Panc1 (cell line): ENCODE measurements at regions of chr17 and their contacts with region 1.

Region 1: GRCh38 chr17:50361561-50362480 is 11.2 kb downstream of the MRPL27 start:
- DNase-seq: peak; percentile 43
- ATAC-seq: peak; percentile 76
- H3K4me3 ChIP-seq: no peak overlapping the region
- H3K27ac ChIP-seq: no peak overlapping the region
- H3K4me1 ChIP-seq: peaks cover 7% of the 10 kb centered on the region; the same call in 1 of the 2 replicates
- H3K27me3 ChIP-seq: no peaks in the 10 kb centered on the region
- CTCF ChIP-seq: peak; percentile 92

Region 2: DNA sequence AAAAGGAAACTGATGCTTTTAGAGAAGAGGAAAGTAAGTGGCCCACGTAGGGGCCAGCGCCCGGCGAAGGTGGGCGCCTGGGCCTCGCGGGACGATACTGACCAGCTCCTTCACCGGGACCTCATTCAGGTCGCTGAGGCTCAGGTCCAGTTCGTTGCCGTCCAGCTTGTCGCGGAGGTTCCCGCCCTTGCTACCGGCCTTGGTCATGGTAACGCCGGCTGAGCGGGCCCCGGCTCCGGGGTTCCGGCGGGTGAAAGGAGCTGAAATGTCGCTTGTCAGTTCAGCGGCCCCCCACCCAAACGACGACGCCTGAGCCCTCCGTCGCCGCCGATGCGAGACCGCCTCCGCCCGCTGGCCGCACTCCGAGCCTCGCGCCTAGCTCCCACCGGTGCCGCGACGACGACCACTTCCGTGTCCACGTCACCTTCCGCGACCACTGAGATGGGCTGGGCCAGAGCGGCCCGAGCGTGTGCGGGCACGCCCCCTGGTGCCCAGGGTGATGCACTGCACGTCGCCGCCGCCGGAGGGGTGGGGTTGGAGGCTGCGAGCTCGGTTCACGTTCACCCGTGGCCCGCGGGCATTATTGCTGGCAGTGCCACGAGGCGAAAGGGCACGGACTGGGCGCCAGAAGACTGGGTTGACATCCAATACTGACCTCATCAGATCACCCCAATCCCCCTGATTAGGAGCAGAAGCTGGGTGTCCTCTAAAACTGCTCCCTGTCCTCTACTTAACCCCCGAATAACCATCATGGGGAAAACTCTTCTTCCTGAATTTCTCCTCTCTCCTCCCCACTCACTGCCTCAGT is 35.5 kb after region 1 on chr17 and contains the start of gene LRRC59:
- CTCF ChIA-PET with region 1: interaction called, 21 read pairs
- POLR2A ChIA-PET with region 1: no interaction called
- in situ Hi-C with region 1: no loop called
- intact Hi-C with region 1: no loop called
- DNase-seq: peak; percentile 57
- ATAC-seq: peak; percentile 96
- H3K4me3 ChIP-seq: peak within 1 kb of the TSS; percentile 87 to 100
- H3K27ac ChIP-seq: peak within 1 kb of the TSS; percentile 95
- H3K4me1 ChIP-seq: peaks cover 14% of the 10 kb centered on the region; the same call in 1 of the 2 replicates
- H3K27me3 ChIP-seq: no peaks in the 10 kb centered on the region
- CTCF ChIP-seq: peak; percentile 99
- total RNA-seq, gene LRRC59: 167 TPM

Region 3: DNA sequence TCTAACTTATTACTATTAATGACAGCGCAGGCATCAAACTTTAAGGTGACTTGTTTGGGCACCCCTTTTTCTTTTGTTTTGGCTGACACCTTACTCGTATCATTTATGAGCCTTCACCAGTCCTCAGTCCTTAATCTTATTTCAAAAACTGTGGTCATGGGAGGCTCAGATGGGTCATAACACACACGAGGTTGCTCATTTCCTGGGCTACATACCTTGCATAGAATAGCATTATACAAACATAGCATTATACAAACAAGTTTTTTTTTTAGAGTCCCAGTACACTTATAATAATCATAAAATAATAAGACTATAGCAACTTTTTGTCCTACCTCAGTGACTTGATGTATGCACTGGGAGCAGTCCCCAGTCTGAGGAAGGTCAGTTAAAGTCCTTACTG is 53.0 kb after region 1 on chr17:
- CTCF ChIA-PET with region 1: no interaction called
- POLR2A ChIA-PET with region 1: no interaction called
- in situ Hi-C with region 1: no loop called
- intact Hi-C with region 1: no loop called
- DNase-seq: no peak
- ATAC-seq: no peak
- H3K4me3 ChIP-seq: no peak overlapping the region
- H3K27ac ChIP-seq: no peak overlapping the region
- H3K4me1 ChIP-seq: no peaks in the 10 kb centered on the region
- H3K27me3 ChIP-seq: no peaks in the 10 kb centered on the region
- CTCF ChIP-seq: no peak